CD4-positive, alpha-beta memory T cell (primary cell): ENCODE measurements at regions of chr12 and their contacts with region 1.

Region 1: GRCh38 chr12:8914716-8915526 is 612 bp downstream of the PHC1 start:
- DNase-seq: peak; percentile 65 to 80 (median 70)
- H3K4me3 ChIP-seq: peak overlapping the region; percentile 81 to 92
- H3K4me3 Mint-ChIP-seq: no peak overlapping the region
- H3K27ac ChIP-seq: peak overlapping the region; percentile 63
- H3K27ac Mint-ChIP-seq: no peak overlapping the region
- H3K4me1 ChIP-seq: peaks cover 36% of the 10 kb centered on the region
- H3K4me1 Mint-ChIP-seq: peaks cover 10 to 17% (median 14%) of the 10 kb centered on the region in 4 donors
- H3K27me3 ChIP-seq: no peaks in the 10 kb centered on the region
- H3K27me3 Mint-ChIP-seq: no peaks in the 10 kb centered on the region

Region 2: DNA sequence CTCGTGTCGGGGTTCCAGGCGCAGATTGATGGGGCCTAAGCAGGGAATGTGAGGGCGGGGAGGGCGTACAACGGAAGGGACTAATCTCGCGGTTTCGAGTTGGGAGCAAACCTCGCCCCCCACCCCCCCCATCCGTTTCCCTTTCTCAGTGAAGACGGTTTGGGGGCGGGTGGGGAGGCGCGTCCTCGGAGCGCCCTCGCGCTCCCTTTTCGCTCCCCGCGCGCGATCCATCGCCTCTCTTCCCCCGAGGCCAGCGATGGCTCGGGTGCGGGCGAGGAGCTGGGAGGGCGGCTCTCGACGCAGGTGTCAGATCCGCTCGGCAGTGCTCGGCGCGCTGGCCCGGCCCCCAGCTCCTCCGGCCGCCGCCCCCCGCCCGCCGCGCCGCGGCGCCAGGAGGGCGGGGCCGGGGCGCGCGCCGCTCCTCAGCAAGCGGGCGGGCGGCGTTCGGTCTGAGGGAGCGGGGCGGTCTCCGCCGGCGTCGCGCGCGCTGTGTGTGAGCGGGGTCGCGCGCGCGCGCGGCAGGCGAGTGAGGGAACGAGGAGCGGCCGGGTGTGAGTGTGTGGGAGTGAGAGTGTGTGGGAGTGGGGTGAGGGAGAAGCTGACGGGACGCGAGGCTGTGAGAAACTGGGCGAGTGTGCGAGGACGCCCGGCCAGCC is 217.3 kb before region 1 on chr12 and contains the start of gene RIMKLB:
- CTCF ChIA-PET with region 1: interaction called, 3 read pairs
- POLR2A ChIA-PET with region 1: no interaction called
- intact Hi-C with region 1: loop called (anchors 1 kb)
- DNase-seq: peak; percentile 69 to 77 (median 75)
- H3K4me3 ChIP-seq: peak within 1 kb of the TSS; percentile 38 to 74
- H3K4me3 Mint-ChIP-seq: peak within 1 kb of the TSS; percentile 90 to 96 (median 92)
- H3K27ac ChIP-seq: peak within 1 kb of the TSS; percentile 59
- H3K27ac Mint-ChIP-seq: peak within 1 kb of the TSS; percentile 87 to 97 (median 91)
- H3K4me1 ChIP-seq: peaks cover 18% of the 10 kb centered on the region
- H3K4me1 Mint-ChIP-seq: peaks cover 19 to 29% (median 22%) of the 10 kb centered on the region in 4 donors
- H3K27me3 ChIP-seq: no peaks in the 10 kb centered on the region
- H3K27me3 Mint-ChIP-seq: no peaks in the 10 kb centered on the region
- total RNA-seq, gene RIMKLB: 23.0 to 27.3 TPM

Region 3: GRCh38 chr12:8771072-8771471 is 143.8 kb before region 1 on chr12:
- CTCF ChIA-PET with region 1: no interaction called
- POLR2A ChIA-PET with region 1: no interaction called
- intact Hi-C with region 1: no loop called
- DNase-seq: no peak
- H3K4me3 ChIP-seq: no peak overlapping the region
- H3K4me3 Mint-ChIP-seq: no peak overlapping the region
- H3K27ac ChIP-seq: no peak overlapping the region
- H3K27ac Mint-ChIP-seq: no peak overlapping the region
- H3K4me1 ChIP-seq: no peaks in the 10 kb centered on the region
- H3K4me1 Mint-ChIP-seq: peaks cover 0 to 2% (median under 1%) of the 10 kb centered on the region in 4 donors
- H3K27me3 ChIP-seq: no peaks in the 10 kb centered on the region
- H3K27me3 Mint-ChIP-seq: no peaks in the 10 kb centered on the region

Region 4: GRCh38 chr12:9702255-9702654 is 787.3 kb after region 1 on chr12:
- CTCF ChIA-PET with region 1: no interaction called
- POLR2A ChIA-PET with region 1: no interaction called
- intact Hi-C with region 1: no loop called
- DNase-seq: peak; percentile 54 to 74 (median 66)
- H3K4me3 ChIP-seq: peak overlapping the region; percentile 4 to 12
- H3K4me3 Mint-ChIP-seq: peak overlapping the region; percentile 35 to 81 (median 75)
- H3K27ac ChIP-seq: peak overlapping the region; percentile 58
- H3K27ac Mint-ChIP-seq: peak overlapping the region; percentile 85 to 97 (median 93)
- H3K4me1 ChIP-seq: peaks cover 77% of the 10 kb centered on the region
- H3K4me1 Mint-ChIP-seq: peaks cover 67 to 84% (median 73%) of the 10 kb centered on the region in 4 donors
- H3K27me3 ChIP-seq: no peaks in the 10 kb centered on the region
- H3K27me3 Mint-ChIP-seq: no peaks in the 10 kb centered on the region